ENCODE measurements at regions of chr11 and their contacts with region 1.

Region 1: DNA sequence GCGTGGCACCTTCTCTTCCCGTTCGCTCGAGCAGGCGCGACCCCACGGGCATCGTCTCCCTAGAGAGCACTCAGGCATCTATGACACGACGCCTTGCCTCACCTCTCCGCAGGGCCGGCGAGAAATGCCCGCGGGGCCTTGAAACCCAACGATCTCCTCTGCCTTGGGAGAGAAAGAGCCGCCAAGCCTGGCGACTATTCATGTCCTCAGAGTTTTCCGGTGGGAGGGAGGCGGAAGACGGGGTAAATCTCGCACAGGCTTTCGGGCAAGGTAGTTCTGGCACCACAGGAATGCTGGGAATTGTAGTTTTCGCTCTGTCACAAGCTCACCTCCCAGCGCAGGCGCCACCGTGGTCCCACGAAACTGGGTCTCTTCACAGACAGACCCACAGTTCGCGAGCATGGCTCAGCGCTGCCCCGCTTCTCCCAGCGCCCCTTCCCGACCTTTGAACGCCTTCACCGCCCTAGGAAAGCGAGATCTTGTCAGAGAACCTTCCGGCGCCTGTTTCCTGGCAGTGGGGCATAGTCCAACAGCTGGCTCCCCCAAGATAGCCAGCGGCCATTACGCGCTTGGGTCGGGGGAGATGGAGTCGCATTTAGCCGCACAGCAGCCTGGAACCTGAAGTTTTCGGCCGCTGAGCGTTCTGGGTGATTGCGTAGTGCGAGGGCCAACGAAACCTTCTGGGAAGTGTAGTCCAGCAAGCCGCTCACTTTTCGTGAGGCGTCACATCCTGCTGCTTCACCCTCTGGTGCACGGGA is at the start of gene CCDC90B:
- DNase-seq: peak; percentile 97
- H3K4me3 ChIP-seq: peak within 1 kb of the TSS; percentile 93
- H3K27ac ChIP-seq: peak within 1 kb of the TSS; percentile 94
- H3K27me3 ChIP-seq: no peaks in the 10 kb centered on the region
- CTCF ChIP-seq: peak; percentile 28

Region 2: GRCh38 chr11:83819933-83820549 is 534.1 kb after region 1 on chr11:
- in situ Hi-C with region 1: loop called (anchors 25 kb)
- DNase-seq: peak; percentile 32
- H3K4me3 ChIP-seq: no peak overlapping the region
- H3K27ac ChIP-seq: no peak overlapping the region
- H3K27me3 ChIP-seq: no peaks in the 10 kb centered on the region
- CTCF ChIP-seq: peak; percentile 40